Activated CD4-positive, alpha-beta T cell treated with anti-CD3 and anti-CD28 coated beads for 36 hours (primary cell): ENCODE measurements at regions of chr3 and their contacts with region 1.

Region 1: DNA sequence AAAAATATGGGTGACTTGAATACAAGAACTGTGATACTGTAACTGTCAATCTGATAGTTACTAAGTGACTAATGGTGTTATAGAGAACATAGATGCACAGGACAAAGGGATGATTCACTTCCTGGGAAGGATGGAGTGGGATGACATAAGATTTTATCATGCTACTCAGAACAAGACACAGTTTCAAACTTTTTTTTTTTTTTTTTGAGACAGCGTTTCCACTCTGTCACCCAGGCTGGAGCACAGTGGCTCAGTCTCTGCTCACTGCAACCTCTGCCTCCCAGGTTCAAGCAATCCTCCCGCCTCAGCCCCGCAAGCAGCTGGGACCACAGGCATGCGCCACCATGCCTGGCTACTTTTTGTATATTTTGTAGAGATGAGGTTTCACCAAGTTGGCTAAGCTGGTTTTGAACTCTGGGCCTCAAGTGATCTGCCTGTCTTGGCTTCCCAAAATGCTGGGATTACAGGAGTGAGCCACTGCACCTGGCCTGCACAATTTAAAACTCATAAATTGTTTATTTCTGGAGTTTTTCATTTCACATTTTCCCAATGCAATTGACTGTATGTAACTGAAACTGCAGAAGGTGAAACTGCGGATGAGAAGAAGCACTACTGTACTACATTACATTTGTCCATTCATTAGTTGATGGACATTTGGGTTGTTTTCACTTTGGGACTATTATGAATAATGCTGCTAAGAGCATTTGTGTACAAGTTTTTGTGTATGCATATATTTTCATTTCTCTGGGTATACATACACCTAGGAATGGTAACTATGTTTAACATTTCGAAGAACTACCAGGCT is 40.6 kb downstream of the ADIPOQ start:
- DNase-seq: peak; percentile 78
- ATAC-seq: peak; percentile 85
- H3K4me3 Mint-ChIP-seq: peak overlapping the region; percentile 20
- H3K27ac Mint-ChIP-seq: peak overlapping the region; percentile 90
- H3K4me1 Mint-ChIP-seq: peaks cover 62% of the 10 kb centered on the region
- H3K27me3 Mint-ChIP-seq: no peaks in the 10 kb centered on the region

Region 2: DNA sequence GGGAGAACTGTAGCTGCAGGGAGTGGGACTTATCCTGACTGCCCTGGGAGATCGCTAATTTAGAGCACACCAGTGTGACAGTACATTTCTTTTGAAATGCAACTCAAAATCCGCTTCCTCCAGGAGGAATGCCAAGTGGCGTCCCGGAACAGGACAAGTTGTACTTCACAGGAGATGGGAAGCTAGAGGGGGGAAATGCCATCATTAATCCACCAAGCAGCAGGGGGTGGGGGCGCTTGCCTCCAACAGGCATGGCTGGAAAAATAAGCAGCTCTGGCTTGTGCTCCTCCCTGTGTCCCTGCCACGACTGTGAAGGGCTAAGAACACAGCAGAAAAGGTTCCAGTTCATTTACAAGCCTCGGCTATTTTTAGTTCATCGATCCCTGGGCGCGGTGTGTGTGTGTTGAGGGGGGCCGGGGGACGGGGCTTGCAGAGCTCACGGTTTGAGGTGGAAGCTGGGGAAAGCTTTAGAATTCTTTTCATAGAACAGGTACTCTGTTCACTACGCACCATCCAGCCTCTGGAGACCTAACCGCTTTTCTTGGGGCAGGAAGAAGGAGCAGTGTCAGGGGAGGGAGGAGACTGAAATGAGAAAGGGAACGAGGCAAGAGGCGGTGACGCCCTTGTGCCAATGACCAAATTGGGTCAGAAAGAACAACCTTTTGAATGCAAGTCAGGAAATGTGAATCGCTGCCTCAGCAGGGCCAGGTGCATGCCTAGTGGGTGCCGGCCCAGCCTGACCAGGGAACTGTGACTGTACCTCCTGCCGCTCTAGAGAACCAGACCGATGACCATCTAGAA is 469.3 kb before region 1 on chr3:
- CTCF ChIA-PET with region 1: no interaction called
- POLR2A ChIA-PET with region 1: no interaction called
- intact Hi-C with region 1: no loop called
- DNase-seq: peak; percentile 56
- ATAC-seq: peak; percentile 13
- H3K4me3 Mint-ChIP-seq: peak overlapping the region; percentile 51
- H3K27ac Mint-ChIP-seq: peak overlapping the region; percentile 17
- H3K4me1 Mint-ChIP-seq: peaks cover 54% of the 10 kb centered on the region
- H3K27me3 Mint-ChIP-seq: peaks cover 5% of the 10 kb centered on the region

Region 3: GRCh38 chr3:186783073-186783730 is 99.9 kb before region 1 on chr3 and contains the start of gene EIF4A2:
- CTCF ChIA-PET with region 1: no interaction called
- POLR2A ChIA-PET with region 1: no interaction called
- intact Hi-C with region 1: loop called in 1 of 2 experiments (anchors 5 kb)
- DNase-seq: peak; percentile 95
- ATAC-seq: peak; percentile 69
- H3K4me3 Mint-ChIP-seq: peak within 1 kb of the TSS; percentile 100
- H3K27ac Mint-ChIP-seq: peak within 1 kb of the TSS; percentile 100
- H3K4me1 Mint-ChIP-seq: peaks cover 32% of the 10 kb centered on the region
- H3K27me3 Mint-ChIP-seq: no peaks in the 10 kb centered on the region
- total RNA-seq, gene EIF4A2: 291 to 390 TPM

Region 4: GRCh38 chr3:186854954-186855353 is 28.1 kb before region 1 on chr3:
- CTCF ChIA-PET with region 1: interaction called, 8 read pairs
- POLR2A ChIA-PET with region 1: no interaction called
- intact Hi-C with region 1: loop called in 1 of 2 experiments (anchors 2 kb)
- DNase-seq: no peak
- ATAC-seq: no peak
- H3K4me3 Mint-ChIP-seq: no peak overlapping the region
- H3K27ac Mint-ChIP-seq: no peak overlapping the region
- H3K4me1 Mint-ChIP-seq: peaks cover 14% of the 10 kb centered on the region
- H3K27me3 Mint-ChIP-seq: no peaks in the 10 kb centered on the region

Region 5: DNA sequence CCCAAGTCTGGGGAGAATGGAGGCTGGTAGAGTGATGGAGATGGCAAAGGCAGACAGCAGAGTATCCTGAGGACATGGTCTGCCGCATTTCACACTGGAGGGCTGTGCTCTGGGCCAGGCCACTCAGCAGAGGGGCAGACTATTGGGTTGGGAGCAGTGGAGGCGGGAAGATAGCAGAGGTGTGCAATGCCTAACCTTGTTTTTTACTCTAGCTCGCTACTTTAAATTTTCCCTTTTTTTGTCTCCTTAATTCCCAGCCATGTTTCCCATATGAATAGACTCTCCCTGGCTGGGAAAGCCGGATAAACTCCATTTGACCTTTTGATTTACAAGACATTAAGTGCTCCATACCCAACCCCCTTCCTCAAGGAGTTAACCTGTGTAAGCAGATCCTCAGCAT is 13.8 kb after region 1 on chr3:
- CTCF ChIA-PET with region 1: no interaction called
- POLR2A ChIA-PET with region 1: no interaction called
- intact Hi-C with region 1: no loop called
- DNase-seq: no peak
- ATAC-seq: no peak
- H3K4me3 Mint-ChIP-seq: no peak overlapping the region
- H3K27ac Mint-ChIP-seq: no peak overlapping the region
- H3K4me1 Mint-ChIP-seq: peaks cover 18% of the 10 kb centered on the region
- H3K27me3 Mint-ChIP-seq: no peaks in the 10 kb centered on the region

Region 6: DNA sequence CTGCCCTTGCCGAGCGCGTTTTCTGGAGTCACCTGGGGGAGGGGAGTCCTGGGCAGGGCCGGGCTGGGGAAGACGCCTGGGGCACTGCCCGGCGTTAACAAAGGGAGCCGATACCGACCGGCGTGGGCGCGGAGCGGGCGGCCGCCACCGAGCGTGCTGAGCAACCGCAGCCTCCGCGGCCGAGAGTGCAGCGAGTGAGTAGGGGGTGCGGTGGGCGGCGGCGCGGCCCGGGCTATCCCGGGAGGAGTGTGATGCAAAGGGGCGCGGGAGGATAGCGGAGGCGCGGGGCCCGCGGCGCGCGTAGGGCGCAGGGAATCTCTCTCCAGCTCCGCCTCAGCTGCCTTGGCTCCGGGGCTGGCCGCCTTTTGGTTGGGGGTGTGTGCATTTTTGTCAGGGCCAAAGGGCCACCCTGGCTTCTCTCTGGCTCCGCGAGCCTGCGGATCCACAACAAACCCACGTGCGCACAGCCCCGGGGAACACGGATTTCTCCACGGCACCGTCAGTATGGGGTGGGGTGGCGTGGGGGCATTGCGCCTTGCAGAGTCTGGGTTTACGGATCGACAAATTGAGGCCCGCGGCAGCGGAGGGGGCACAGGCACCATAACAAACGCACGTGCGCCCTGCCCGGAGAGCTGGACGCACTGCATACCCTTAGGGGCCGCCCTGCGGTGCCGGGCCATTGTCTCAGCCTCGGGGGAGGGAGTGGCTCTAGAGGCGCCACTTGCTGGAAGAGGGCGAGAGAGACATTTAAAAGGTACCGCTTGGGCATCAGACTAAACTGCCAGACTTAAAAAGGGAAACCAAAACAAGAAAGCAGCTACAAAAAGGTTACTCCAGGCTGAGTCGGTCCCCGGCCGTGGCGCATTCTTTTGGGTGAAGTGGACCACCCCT is 47.8 kb after region 1 on chr3:
- CTCF ChIA-PET with region 1: interaction called, 3 read pairs
- POLR2A ChIA-PET with region 1: interaction called, 15 read pairs
- intact Hi-C with region 1: loop called (anchors 1 kb)
- DNase-seq: peak; percentile 79
- ATAC-seq: peak; percentile 80
- H3K4me3 Mint-ChIP-seq: peak overlapping the region; percentile 90
- H3K27ac Mint-ChIP-seq: peak overlapping the region; percentile 96
- H3K4me1 Mint-ChIP-seq: peaks cover 35% of the 10 kb centered on the region
- H3K27me3 Mint-ChIP-seq: no peaks in the 10 kb centered on the region

Region 7: DNA sequence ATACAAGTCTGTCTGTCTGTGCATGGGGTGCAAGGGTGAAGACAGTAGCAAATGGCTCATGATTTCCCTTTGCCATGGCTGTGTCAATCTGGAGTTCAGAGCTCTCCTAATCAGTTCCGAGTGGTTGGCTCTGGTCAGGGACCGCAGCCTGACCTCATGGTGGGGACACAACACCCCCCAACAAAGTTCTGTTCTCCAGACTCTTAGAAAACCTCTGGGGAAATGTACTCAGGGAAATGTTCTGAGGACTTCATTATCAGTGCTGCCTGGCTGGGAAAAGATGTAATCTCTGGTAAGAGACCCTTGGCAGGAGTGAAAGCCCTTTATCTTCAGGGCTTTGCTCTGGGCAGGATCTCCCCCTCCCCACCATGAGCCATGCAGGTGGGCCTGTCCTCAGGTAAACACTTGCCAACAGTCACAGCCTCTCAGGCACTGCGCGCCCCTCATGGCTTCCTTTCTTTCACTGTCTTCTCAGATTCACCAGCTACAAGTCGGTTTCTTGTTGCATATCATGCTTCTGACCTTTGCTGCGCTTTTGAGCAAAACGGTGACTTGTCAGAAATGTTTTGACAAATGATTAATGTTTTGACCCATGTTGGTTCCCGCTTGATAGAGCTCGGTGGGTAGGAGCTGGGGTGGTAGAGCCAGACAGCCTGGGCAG is 142.7 kb after region 1 on chr3:
- CTCF ChIA-PET with region 1: no interaction called
- POLR2A ChIA-PET with region 1: interaction called, 12 read pairs
- intact Hi-C with region 1: loop called (anchors 1 to 2 kb)
- DNase-seq: peak; percentile 64
- ATAC-seq: peak; percentile 36
- H3K4me3 Mint-ChIP-seq: peak overlapping the region; percentile 85
- H3K27ac Mint-ChIP-seq: peak overlapping the region; percentile 97
- H3K4me1 Mint-ChIP-seq: peaks cover 49% of the 10 kb centered on the region
- H3K27me3 Mint-ChIP-seq: no peaks in the 10 kb centered on the region

Region 8: DNA sequence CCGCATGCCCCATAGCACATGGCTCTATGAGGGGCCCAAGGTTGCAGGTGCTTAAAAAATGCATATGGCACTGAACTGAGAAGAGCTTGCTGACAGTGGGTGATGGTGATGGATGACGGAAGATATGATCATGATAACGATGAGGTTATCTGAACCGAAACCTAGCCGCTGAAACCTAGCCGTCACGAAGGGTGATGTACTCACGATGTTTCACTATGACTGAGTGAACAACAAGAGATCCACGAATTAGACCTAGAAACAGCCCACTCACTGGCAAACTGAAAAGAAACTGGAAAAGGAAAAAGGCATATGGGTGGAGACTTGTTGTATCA is 919.8 kb after region 1 on chr3:
- CTCF ChIA-PET with region 1: no interaction called
- POLR2A ChIA-PET with region 1: no interaction called
- intact Hi-C with region 1: loop called in 1 of 2 experiments (anchors 10 kb)
- DNase-seq: peak; percentile 86
- ATAC-seq: peak; percentile 60
- H3K4me3 Mint-ChIP-seq: peak overlapping the region; percentile 34
- H3K27ac Mint-ChIP-seq: peak overlapping the region; percentile 81
- H3K4me1 Mint-ChIP-seq: peaks cover 93% of the 10 kb centered on the region
- H3K27me3 Mint-ChIP-seq: no peaks in the 10 kb centered on the region